Left colon (tissue), 2 donors: ENCODE measurements at regions of chr1 and their contacts with region 1.

Region 1: DNA sequence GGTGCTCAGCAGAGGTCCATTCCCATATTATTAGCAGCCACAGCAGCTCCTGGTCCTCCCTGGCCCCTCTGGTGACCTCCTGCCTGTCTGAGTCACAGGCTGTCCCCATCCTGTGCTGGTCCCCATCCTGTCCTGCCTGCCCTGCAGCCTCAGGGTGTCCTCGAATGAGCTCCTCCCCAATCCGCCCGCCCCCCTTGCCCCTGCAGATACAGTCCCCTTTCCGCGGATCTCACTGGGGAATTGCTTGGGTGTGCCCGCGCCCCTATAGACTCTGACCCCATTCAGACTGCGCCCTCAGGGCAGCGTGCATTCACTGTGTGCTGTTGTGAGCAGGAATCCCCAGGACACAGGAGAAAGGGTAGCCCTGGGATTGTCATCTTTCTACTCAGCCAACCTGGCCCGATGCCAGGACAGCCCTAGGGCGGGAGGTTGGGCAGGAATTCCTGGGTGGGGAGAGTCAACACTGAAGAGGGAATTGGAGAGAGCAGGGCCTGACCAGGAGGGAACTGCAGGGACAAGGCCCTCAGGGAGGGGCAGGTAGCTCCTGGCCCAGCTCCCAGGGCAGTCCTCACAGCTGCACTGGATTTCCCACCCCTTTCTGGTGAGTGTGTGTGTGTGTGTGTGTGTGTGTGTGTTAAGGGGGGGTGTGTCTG is 1.1 kb upstream of the GUCA2A start:
- DNase-seq: peak; percentile 93 to 94
- ATAC-seq: peak; percentile 76

Region 2: DNA sequence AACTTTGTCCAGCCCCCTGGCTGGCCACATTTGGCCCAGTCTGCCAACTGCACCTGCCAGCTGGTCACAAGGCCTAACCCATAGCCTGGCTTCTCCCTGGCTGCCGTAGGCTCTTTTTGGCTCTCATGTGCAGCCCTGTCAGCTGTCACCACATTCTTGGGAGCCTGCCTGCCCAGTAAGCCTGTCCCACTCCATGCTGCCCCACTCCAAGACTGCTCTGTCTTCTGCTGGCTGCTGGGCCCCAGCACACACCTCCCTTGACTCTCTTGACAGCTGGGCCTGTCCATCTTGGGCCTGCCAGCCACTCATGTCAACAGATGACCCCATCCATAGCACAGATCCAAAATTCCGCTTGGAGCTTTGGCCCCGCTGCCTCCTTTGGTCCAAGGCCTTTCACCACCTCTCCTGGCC is 606.9 kb before region 1 on chr1:
- intact Hi-C with region 1: no loop called
- DNase-seq: no peak
- ATAC-seq: no peak

Region 3: GRCh38 chr1:41573785-41574713 is 591.6 kb before region 1 on chr1:
- intact Hi-C with region 1: loop called in 1 of 2 experiments (anchors 10 kb)
- DNase-seq: peak; percentile 61 to 87
- ATAC-seq: peak; percentile 94